ENCODE measurements at regions of chr17 and their contacts with region 1.

Region 1: DNA sequence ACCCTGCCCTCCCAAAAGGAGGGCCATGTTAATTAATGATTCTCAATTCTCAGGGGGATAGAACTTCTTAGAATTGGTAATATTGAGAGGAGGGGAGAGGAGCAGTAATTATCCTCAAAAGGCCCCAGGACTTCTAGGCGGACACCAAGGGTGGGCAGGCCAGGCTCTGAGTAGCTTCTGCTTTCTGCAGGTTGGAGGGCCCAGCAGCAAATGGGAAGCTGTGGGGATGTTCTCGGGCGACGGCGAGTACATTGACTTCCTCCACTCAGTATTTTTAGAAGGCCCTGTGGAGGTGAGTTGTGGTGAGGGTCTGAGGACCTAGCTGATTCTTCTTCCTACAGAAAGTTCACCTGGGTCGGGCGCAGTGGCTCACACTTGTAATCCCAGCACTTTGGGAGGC is 57.5 kb downstream of the DNAH2 start:
- DNase-seq: no peak
- H3K4me3 ChIP-seq: no peak overlapping the region
- CTCF ChIP-seq: no peak

Region 2: DNA sequence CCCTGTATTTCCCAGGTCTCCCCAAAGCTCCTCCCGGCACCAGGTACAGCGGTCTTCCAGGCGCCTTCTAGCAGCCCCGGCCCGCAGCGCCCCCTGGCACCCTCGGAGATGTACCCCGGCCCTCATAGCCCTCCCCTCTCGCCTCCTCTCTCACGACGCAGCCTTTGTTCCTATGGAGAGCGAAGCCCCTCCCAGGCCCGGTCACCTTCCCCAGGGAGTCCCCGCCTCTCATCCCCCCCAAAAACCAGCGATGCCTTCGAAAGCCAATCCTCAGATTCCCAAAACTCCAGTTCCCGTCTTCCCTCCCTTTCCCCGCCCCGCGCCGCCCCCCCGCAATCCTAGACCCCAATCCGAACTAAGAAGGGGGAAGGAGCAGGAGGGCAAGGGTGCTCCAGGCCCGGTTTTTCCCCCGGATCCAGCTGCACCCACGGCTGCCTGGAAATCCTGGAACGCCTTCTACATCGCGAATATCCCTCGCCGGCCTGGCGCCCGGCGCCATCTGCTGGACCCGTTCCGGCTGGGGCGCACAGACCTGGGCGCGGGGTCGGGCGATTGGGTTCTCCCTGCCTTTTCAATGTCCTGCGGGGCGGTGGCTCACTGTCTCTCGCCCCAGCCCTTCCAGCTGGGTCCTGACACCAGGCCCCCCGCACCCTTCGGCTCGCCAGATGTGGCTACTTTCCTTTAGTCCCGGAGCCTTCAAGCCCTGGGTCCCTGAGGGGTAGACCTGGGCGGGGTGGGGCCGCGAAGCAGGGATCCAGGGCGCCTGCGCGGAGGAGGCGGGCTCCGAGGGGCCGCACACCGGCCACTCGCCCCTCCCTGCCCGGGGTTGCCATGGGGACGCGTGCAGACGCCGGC is 57.9 kb before region 1 on chr17 and contains the start of gene DNAH2:
- in situ Hi-C with region 1: no loop called
- DNase-seq: peak; percentile 85
- H3K4me3 ChIP-seq: peak within 1 kb of the TSS; percentile 52
- CTCF ChIP-seq: peak; percentile 49

Region 3: DNA sequence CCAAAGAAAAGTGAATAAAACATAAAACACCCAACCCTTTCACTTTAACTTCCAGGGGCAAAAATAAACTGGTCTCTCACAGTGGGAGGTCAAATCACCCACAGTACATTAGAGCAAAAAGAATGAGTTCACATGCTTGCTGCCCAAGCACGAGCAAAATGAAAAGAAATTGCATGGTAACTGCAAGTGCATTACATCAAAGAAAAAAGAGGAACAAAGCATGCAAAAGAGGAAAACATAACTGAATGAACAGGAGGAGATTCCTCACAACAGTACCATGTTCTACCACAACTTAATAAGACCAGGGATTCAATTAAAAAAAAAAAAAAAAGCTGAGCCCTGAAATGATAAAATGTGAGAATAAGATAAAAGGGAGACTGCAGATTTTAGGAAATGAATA is 45.2 kb before region 1 on chr17:
- in situ Hi-C with region 1: no loop called
- DNase-seq: no peak
- H3K4me3 ChIP-seq: no peak overlapping the region
- CTCF ChIP-seq: no peak

Region 4: DNA sequence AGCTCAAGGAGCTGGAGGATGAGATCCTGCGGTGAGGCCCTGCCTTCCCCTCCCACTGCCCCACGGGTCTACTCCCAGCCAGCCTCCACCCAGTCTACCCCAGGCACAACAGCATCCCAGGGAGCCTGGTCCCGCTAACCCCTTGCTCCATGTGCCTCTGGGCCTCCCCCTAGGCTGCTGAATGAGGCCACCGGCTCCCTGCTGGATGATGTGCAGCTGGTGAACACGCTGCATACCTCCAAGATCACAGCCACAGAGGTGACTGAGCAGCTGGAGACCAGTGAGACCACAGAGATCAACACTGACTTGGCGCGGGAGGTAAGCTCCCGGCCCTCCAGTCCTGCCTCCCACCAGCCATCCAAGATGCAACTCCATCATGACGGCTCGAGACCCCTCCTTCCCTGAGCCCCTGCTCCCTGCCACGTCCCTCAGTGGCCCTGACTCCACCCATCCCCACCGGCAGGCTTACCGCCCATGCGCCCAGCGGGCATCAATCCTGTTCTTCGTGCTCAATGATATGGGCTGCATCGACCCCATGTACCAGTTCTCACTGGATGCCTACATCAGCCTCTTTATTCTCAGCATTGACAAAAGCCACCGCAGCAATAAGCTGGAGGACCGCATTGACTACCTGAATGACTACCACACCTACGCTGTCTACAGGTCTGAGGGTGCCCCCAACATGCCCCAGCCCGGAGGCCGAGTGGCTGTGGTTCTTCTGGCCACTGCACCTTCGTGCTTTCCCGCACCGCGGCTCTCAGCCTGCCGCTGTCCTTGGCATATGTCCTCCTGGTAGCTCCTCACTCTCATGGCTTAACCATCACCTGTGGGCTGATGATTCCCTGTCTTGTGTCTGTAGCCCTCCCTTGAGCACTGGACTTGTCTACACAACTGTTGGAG is 43.9 kb after region 1 on chr17:
- in situ Hi-C with region 1: loop called (anchors 5 kb)
- DNase-seq: no peak
- H3K4me3 ChIP-seq: no peak overlapping the region
- CTCF ChIP-seq: no peak

Region 5: GRCh38 chr17:7856883-7857723 is 82.1 kb after region 1 on chr17 and contains the start of gene NAA38:
- in situ Hi-C with region 1: no loop called
- DNase-seq: peak; percentile 99
- H3K4me3 ChIP-seq: peak within 1 kb of the TSS; percentile 56
- CTCF ChIP-seq: peak; percentile 47

Measured in astrocyte of the cerebellum (primary cell).